Activated CD4-positive, alpha-beta memory T cell treated with anti-CD3 and anti-CD28 coated beads, Interleukin-2, amount 10 ng/mL, durations not matched to agents 7 days and 5 days (primary cell): ENCODE measurements at regions of chr17 and their contacts with region 1.

Region 1: DNA sequence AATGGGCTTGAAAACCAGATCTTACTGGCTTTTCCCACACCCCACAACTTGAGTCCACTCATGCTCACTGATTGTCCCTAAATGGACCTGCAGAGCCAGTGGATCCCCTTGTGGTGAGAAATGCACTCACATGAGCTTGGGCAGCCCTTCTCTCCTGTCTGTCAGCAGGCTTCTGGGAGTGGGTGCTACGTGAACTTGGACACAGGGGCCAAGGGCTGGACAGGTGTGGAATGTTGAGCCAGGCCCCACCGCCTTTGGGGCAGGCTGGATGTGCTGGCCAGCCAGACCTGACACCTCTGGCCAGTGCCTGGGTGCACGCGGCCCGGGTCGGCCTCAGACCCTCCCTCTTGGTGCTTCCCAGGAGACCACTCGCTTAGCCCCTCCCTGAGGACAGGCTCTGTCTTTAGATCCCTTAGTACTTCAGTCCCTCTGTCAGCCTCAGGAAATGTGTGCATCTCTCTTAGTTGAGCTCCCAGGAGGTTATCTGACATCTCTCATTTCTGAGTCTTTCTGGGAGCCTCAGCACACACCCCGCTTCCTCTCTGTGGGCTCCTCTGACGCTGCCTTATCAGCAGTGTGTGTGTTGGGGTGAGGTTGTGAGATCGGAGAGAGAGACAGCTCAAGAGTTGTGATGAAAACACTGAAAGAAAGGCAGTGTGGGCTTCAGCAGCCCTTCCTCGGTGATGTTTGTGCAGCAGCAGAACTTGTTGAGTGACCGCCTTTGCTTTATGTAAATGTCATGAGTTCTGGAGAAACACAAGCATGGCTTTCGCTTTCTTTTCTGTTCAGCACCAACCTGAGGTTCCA is 117.0 kb downstream of the RAB11FIP4 start:
- DNase-seq: peak; percentile 87
- H3K4me3 Mint-ChIP-seq: peak overlapping the region; percentile 77
- H3K27ac Mint-ChIP-seq: peak overlapping the region; percentile 100
- H3K4me1 Mint-ChIP-seq: peaks cover 51% of the 10 kb centered on the region
- H3K27me3 Mint-ChIP-seq: no peaks in the 10 kb centered on the region

Region 2: DNA sequence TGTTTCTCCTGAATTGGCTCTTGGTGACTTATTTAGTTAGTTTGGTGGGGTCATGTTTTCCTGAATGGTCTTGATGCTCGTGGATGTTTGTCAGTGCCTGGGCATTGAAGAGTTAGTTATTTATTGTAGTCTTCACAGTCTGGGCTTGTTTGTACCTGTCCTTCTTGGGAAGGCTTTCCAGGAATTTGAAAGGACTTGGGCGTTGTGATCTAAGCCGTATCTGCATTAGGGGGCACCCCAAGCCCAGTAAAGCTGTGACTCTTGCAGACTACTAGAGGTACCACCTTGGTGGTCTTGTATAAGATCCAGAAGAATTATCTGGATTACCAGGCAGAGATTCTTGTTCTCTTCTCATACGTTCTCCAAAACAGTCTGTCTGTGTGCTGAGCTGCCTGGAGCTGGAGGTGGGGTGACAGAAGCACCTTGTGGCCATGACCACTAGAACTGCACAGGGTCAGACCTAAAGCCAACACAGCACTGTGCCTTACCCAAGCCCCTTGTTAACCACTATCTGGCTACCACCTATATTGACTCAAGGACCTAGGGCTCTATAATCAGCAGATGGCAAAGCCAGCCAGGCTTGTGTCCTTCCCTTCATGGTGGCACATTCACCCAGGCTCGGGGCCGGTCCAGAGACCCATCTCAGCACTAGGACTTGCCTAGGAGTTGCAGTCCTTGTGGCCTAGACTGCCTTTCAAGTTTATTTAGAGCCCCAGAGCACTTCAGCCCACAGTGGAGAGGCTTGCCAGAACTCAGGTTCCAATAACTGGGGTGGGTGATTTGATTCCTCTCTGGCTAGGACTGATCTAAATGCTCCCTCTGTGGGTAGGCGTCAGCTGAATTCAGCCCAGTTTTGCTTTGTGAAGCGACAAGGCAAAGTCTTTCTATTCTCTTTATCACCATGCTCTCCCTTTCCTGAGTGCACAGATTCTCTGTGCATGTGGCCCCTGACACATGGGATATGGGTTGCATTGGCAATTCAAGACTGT is 526.7 kb before region 1 on chr17:
- CTCF ChIA-PET with region 1: no interaction called
- POLR2A ChIA-PET with region 1: no interaction called
- DNase-seq: no peak
- H3K4me3 Mint-ChIP-seq: no peak overlapping the region
- H3K27ac Mint-ChIP-seq: no peak overlapping the region
- H3K4me1 Mint-ChIP-seq: peaks cover 6% of the 10 kb centered on the region
- H3K27me3 Mint-ChIP-seq: no peaks in the 10 kb centered on the region

Region 3: GRCh38 chr17:31313982-31314784 is 194.3 kb before region 1 on chr17 and contains the start of gene EVI2B:
- CTCF ChIA-PET with region 1: interaction called, 3 read pairs
- POLR2A ChIA-PET with region 1: interaction called, 13 read pairs
- DNase-seq: no peak
- H3K4me3 Mint-ChIP-seq: peak within 1 kb of the TSS; percentile 83
- H3K27ac Mint-ChIP-seq: peak within 1 kb of the TSS; percentile 88
- H3K4me1 Mint-ChIP-seq: peaks cover 44% of the 10 kb centered on the region
- H3K27me3 Mint-ChIP-seq: no peaks in the 10 kb centered on the region
- total RNA-seq, gene EVI2B: 109 TPM

Region 4: GRCh38 chr17:31321481-31321880 is 187.0 kb before region 1 on chr17 and contains the start of gene EVI2A:
- CTCF ChIA-PET with region 1: no interaction called
- POLR2A ChIA-PET with region 1: interaction called, 13 read pairs
- DNase-seq: peak; percentile 86
- H3K4me3 Mint-ChIP-seq: peak within 1 kb of the TSS; percentile 79
- H3K27ac Mint-ChIP-seq: peak within 1 kb of the TSS; percentile 99
- H3K4me1 Mint-ChIP-seq: peaks cover 30% of the 10 kb centered on the region
- H3K27me3 Mint-ChIP-seq: no peaks in the 10 kb centered on the region
- total RNA-seq, gene EVI2A: 109 to 110 TPM

Region 5: DNA sequence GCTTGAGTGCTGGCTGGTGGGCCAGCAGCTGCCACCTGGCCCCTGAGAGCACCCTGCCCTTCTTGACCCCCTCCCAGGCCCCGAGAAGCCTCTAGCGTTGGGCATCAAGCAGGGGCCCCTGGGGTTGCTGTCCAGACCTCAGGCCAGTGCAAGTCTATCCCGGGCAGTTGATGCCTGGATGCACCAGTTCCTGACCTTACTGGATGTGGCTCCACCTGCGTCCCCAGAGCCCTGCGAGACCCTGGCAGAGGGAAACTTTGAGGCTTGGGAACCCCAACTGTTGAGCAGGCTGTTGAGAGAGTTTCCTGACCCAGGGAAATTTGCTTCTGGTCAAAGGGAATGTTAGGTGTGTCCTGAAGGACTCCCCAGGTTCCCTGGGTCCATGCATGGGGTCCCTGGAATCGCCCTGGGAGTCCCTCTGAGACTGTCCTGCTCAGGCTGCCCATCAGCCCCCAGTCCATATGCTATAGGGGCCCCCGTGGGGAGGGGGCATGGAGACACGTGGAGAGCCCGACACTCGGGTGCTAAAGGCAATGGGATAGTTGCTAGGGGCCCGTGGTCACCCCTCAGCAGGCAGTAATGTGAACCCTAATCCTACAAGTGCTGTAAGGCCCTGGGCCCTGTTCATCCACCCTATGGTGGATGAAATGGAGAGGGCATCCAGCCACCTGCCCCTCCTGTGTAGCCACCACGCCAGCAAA is 70.6 kb before region 1 on chr17:
- CTCF ChIA-PET with region 1: interaction called, 18 read pairs
- POLR2A ChIA-PET with region 1: interaction called, 6 read pairs
- DNase-seq: no peak
- H3K4me3 Mint-ChIP-seq: no peak overlapping the region
- H3K27ac Mint-ChIP-seq: no peak overlapping the region
- H3K4me1 Mint-ChIP-seq: peaks cover 17% of the 10 kb centered on the region
- H3K27me3 Mint-ChIP-seq: peaks cover 20% of the 10 kb centered on the region

Region 6: GRCh38 chr17:31487648-31488263 is 20.7 kb before region 1 on chr17:
- CTCF ChIA-PET with region 1: interaction called, 58 read pairs
- POLR2A ChIA-PET with region 1: interaction called, 314 read pairs
- DNase-seq: peak; percentile 94
- H3K4me3 Mint-ChIP-seq: peak overlapping the region; percentile 76
- H3K27ac Mint-ChIP-seq: peak overlapping the region; percentile 67
- H3K4me1 Mint-ChIP-seq: peaks cover 50% of the 10 kb centered on the region
- H3K27me3 Mint-ChIP-seq: peaks cover 3% of the 10 kb centered on the region

Region 7: GRCh38 chr17:31494259-31495021 is 14.1 kb before region 1 on chr17:
- CTCF ChIA-PET with region 1: interaction called, 58 read pairs
- POLR2A ChIA-PET with region 1: interaction called, 314 read pairs
- DNase-seq: peak; percentile 81
- H3K4me3 Mint-ChIP-seq: peak overlapping the region; percentile 54
- H3K27ac Mint-ChIP-seq: peak overlapping the region; percentile 99
- H3K4me1 Mint-ChIP-seq: peaks cover 74% of the 10 kb centered on the region
- H3K27me3 Mint-ChIP-seq: no peaks in the 10 kb centered on the region

Region 8: DNA sequence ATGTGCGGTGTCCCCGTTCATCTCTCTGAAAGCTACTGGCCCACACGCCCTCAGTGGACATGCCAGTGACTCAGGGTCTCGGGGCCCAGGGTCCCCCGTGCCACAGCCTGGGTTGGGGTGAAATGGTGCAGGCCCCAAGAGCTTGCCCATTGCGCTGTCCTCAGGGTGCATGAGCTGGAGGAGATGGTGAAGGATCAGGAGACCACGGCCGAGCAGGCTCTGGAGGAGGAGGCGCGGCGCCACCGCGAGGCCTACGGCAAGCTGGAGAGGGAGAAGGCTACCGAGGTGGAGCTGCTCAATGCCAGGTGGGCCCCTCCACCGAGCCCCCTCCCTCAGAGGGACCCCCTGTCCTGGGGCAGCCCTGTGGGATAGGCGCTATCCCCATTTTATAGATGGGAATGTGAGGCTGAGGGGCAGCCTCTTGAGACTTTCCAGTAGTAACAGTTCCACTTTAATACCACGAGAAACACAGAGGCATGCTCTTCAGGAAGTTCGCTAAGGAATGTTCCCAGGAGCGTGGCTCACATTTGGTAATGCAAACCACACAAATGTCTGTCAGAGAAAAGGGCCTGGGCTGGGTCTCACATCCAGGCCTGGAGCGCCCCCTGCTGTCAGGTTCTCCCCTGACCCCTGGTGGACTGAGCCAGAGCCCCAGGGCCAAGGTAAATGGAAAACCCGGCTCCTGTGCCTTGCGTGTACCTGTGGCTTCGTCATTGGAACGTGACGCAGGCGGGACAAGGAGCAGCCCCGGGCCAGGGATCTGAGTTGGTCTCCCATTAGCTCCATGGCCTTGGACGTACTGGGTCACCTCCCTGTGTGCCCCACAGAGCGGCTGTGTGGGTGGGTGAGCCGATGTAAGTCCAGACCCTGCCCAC is 16.7 kb after region 1 on chr17:
- CTCF ChIA-PET with region 1: interaction called, 17 read pairs
- POLR2A ChIA-PET with region 1: interaction called, 21 read pairs
- DNase-seq: peak; percentile 85
- H3K4me3 Mint-ChIP-seq: no peak overlapping the region
- H3K27ac Mint-ChIP-seq: no peak overlapping the region
- H3K4me1 Mint-ChIP-seq: no peaks in the 10 kb centered on the region
- H3K27me3 Mint-ChIP-seq: no peaks in the 10 kb centered on the region